Calu3 (cell line): ENCODE measurements at regions of chr6 and their contacts with region 1.

Region 1: GRCh38 chr6:111483736-111484632 is 966 bp upstream of the REV3L start:
- DNase-seq: peak; percentile 87
- H3K4me3 Mint-ChIP-seq: peak overlapping the region; percentile 93
- H3K27ac Mint-ChIP-seq: peak overlapping the region; percentile 99
- H3K4me1 Mint-ChIP-seq: peaks cover 3% of the 10 kb centered on the region
- H3K27me3 Mint-ChIP-seq: no peaks in the 10 kb centered on the region
- CTCF ChIP-seq: no peak

Region 2: DNA sequence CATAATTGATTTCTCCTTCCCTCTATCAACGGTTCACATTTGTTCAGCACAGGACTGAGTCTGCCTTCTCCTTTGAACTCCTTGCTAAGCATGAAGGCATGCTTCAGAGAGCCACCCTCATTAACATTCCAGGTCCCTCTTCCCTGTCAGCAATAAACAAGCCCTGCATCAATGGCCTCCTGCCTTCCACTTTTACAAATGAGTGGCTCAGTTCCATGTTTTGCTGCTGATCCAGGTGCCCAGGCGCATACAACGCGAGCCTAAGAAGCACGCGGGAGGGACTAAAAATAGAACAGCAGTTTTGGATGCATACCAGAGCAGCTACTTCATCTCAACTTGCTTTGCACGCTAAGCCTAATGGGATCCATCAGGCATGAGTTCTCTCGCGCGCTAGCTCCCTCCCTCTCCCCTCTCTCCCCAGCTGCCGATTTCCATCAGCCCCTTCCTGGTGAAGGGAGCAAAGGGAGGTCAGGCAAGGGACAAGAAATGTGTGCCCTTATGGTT is 68.3 kb after region 1 on chr6:
- CTCF ChIA-PET with region 1: no interaction called
- intact Hi-C with region 1: loop called (anchors 5 kb)
- DNase-seq: peak; percentile 58
- H3K4me3 Mint-ChIP-seq: peak overlapping the region; percentile 59
- H3K27ac Mint-ChIP-seq: peak overlapping the region; percentile 91
- H3K4me1 Mint-ChIP-seq: peaks cover 31% of the 10 kb centered on the region
- H3K27me3 Mint-ChIP-seq: no peaks in the 10 kb centered on the region
- CTCF ChIP-seq: no peak

Region 3: DNA sequence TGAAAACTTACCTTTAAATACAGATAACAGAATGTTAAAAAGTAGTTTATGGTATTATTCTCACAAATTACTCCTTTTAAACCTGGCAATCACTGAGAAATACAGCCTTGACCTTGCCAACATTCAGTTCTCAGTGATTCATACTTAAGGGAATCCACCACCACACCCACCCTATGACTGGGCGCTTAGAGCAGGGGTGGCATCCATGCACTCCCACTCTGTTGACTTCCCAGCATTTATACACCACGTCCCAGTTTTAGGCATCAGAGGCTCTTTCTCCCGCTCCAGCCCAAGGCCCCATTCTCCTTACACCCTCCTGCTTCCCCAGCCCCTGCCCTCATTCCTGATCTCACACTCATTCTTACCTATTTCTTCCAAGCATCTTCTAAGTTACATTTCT is 105.4 kb after region 1 on chr6:
- CTCF ChIA-PET with region 1: no interaction called
- intact Hi-C with region 1: loop called (anchors 5 kb)
- DNase-seq: peak; percentile 69
- H3K4me3 Mint-ChIP-seq: peak overlapping the region; percentile 4
- H3K27ac Mint-ChIP-seq: peak overlapping the region; percentile 48
- H3K4me1 Mint-ChIP-seq: peaks cover 77% of the 10 kb centered on the region
- H3K27me3 Mint-ChIP-seq: no peaks in the 10 kb centered on the region
- CTCF ChIP-seq: no peak